BJ (cell line): ENCODE measurements at regions of chr10 and their contacts with region 1.

Region 1: GRCh38 chr10:11757821-11758463 is 15.8 kb downstream of the ECHDC3 start:
- DNase-seq: no peak
- H3K4me3 ChIP-seq: no peak overlapping the region
- H3K27me3 ChIP-seq: no peaks in the 10 kb centered on the region
- CTCF ChIP-seq: peak; percentile 95

Region 2: DNA sequence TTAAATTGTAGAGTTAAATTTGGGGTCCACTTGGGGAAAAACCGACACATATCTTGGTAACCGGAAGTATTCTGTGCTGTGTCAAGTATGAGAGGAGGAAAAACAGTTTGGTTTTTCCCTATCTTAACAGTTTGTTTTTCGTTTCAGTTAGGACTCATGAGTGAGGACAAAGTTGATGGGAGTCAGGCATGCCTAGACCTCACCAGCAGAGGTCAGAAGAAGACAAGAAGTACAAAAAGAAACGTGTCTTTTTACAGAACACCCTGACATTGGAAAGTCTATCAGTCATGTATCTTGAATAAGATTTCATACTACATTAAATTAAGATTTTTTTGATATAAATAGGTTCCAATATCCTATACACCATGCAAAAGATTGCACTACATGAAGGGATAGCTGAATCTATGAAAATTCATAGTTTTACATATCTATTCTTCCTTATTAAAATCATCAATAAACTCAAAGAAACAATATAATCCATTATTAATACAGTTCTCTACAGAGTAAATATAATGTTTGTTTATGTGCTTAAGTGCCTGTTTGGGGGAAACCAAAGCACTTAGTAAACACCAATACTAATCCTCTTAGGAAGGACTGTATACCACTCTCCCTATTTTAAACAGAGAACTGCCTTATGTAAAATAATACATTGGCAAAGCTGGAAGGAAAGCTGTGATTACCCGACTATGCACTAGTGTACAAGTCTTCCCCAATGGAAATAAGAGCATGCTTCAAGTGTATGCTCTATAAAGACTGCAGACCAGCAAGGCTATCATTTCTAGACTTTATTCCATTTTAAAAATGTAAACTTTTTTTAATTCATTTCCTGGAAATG is 242.1 kb before region 1 on chr10:
- CTCF ChIA-PET with region 1: interaction called, 48 read pairs
- POLR2A ChIA-PET with region 1: no interaction called
- DNase-seq: no peak
- H3K4me3 ChIP-seq: no peak overlapping the region
- H3K27me3 ChIP-seq: no peaks in the 10 kb centered on the region
- CTCF ChIP-seq: peak; percentile 86

Region 3: GRCh38 chr10:11521860-11522259 is 236.1 kb before region 1 on chr10:
- CTCF ChIA-PET with region 1: interaction called, 16 read pairs
- POLR2A ChIA-PET with region 1: no interaction called
- DNase-seq: no peak
- H3K4me3 ChIP-seq: no peak overlapping the region
- H3K27me3 ChIP-seq: no peaks in the 10 kb centered on the region
- CTCF ChIP-seq: no peak

Region 4: GRCh38 chr10:11746883-11747539 is 10.9 kb before region 1 on chr10:
- CTCF ChIA-PET with region 1: interaction called, 19 read pairs
- POLR2A ChIA-PET with region 1: no interaction called
- DNase-seq: no peak
- H3K4me3 ChIP-seq: no peak overlapping the region
- H3K27me3 ChIP-seq: no peaks in the 10 kb centered on the region
- CTCF ChIP-seq: no peak

Region 5: DNA sequence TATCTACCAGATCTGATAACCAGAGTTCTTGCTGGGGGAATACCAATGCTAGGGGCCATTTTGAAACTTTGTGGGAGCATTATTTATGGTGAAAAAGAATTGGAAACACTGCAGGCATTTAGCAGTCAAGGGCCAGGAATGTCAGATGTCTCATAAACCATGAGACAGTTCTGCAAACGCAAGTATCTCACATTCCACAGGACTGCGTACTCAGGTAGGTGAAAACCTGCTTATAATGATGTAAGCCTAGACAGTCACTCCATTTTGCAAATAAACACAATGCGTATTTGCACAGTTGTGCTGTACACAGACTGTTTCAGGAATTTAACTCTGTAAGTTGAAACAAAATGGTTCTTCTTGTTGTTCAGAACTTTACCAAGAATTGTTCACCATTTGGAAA is 18.2 kb after region 1 on chr10:
- CTCF ChIA-PET with region 1: interaction called, 33 read pairs
- POLR2A ChIA-PET with region 1: no interaction called
- DNase-seq: no peak
- H3K4me3 ChIP-seq: no peak overlapping the region
- H3K27me3 ChIP-seq: peaks cover 18% of the 10 kb centered on the region
- CTCF ChIP-seq: no peak